Right ventricle myocardium superior (tissue), 1 donor: ENCODE measurements at regions of chr3 and their contacts with region 1.

Region 1: DNA sequence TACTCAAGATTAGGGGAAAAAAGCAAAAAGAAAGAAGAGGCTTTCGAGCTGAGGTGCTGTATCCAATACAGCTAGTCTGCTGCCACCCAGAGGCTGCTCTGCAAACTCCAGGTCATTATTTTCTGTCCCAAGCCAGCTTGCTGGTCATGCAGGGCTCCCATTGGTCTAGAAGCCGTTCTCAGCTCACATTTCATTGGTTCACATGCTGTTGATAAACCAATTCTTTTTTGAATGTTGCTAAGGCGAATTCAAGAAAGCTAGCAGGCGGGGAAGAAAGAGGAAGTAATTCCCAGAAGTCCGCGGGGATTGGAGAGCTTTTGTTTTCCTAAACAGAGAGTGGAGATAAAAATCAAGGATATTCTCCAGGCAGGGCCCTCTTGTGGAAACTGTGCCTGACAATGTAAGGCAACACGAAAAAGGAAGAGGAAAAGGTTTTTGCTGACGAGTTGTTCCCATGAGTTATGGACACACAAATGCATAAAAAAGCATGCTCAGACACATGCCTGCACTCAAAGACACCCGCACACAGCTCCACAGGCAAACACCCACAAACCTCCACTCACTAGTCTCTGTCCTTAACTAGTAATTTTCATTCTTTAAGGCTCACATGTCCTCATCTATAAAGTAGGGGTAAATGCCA is 33.4 kb downstream of the FSTL1 start:
- DNase-seq: peak; percentile 91
- ATAC-seq: peak; percentile 63

Region 2: GRCh38 chr3:119463171-119464169 is 953.9 kb before region 1 on chr3 and contains the start of gene TMEM39A:
- intact Hi-C with region 1: no loop called
- DNase-seq: peak; percentile 100
- ATAC-seq: peak; percentile 99
- total RNA-seq, gene TMEM39A: 15.0 TPM

Region 3: DNA sequence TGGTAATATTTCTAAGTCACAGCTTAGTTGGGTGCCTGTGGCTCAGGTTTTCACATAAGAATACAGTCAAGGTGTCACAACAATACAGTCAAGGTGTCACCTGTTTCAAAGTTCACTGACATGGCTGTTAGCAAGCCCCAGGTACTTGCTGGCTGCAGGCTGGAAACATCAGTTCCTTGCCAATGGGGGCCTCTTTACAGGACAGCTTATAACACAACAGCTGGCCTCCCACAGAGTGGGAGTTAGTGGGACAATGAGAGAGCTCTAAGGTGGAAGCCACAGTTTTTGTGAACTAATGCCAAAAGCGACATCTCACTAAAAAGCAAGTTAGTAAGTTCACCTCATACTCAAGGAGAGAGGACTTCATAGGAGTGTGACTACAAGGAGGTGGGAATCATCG is 177.7 kb before region 1 on chr3:
- intact Hi-C with region 1: loop called (anchors 5 kb)
- DNase-seq: no peak
- ATAC-seq: no peak

Region 4: DNA sequence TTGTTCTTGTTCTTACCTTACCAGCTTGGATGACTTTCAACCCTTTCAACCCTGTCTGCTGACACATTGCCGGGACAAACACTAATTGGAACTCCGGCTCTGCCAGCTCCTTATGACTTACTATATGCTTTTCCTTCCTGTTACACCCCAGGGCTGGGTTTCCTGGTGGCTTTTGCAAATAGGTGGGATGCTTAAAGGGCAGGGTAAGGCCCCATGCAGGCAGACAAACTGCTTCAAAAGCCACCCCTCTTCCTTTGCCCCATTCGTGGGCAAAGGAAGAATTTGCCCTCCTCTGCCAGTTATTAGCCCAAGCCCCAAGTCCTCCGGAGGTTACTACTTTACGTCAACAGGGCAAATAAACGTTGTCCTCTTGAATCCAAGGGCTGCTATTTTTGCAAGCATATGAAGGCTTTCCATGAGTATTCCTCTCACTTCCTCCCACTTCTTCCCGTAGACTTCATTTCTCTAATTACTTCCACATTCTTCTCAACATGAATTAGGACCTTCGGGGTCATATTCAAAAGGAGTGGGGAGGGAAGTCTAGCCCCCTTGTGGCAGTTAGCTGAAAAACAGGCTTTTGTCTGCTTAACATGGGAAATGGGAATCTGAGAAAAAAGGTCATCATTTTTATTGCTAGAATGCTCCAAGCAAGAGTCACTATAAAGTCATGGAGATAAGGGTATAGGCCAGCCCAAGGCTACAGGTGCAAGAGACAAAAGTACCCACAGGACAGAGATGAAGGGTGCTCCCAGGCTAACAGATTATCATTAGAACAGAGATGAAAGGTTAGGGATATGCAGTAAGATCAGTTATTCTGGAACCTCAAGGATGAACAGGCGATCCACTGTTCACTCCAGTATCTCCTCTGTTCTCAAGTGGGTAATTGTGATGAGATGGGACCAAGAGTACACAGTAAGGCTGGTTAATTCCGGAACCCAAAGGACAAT is 89.7 kb after region 1 on chr3:
- intact Hi-C with region 1: loop called (anchors 5 kb)
- DNase-seq: no peak
- ATAC-seq: peak; percentile 76